Activated CD4-positive, alpha-beta memory T cell treated with anti-CD3 and anti-CD28 coated beads for 36 hours (primary cell): ENCODE measurements at regions of chr2 and their contacts with region 1.

Region 1: DNA sequence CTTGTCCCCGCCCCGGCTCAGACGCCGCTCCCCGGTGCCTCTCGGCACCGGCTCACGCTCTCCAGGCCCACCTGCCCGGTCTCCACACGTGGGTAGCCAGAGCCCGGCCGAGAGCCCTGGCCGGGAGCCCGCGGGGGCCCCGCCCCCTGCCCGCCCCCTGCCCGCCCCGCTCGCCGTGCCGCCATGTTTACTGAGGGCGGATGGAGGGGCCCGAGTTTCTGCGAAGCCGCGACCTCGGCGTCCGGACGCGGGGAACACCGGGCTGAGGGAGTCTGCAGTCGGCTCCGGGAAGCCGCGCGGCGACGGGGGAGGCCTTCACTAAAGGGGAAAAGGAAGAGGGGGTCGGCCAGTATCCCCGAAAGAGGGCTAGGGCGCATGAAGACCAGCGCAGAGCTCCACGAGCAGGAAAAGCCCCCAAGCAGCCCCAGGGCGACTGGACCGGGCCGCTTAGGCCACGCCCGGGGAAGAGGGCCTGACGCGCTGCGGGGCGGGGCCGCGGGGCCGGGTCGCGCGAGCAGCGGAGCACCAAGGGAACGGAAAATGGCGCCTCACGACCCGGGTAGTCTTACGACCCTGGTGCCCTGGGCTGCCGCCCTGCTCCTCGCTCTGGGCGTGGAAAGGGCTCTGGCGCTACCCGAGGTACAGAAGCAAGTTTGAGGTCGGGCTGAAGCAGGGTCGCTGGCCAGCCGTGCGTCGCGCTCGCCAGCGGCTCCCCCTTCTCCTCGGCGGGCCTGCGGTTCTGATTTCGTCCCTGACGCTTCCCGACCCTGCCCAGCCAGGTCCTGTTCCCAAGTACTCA is at the starts of genes ATRAID and SLC5A6:
- DNase-seq: peak; percentile 92
- H3K4me3 Mint-ChIP-seq: peak within 1 kb of the TSS; percentile 98
- H3K27ac Mint-ChIP-seq: peak within 1 kb of the TSS; percentile 99
- H3K4me1 Mint-ChIP-seq: peaks cover 48% of the 10 kb centered on the region
- H3K27me3 Mint-ChIP-seq: no peaks in the 10 kb centered on the region
- total RNA-seq, gene ATRAID: 84.0 to 92.7 TPM
- total RNA-seq, gene SLC5A6: 29.2 to 30.2 TPM

Region 2: DNA sequence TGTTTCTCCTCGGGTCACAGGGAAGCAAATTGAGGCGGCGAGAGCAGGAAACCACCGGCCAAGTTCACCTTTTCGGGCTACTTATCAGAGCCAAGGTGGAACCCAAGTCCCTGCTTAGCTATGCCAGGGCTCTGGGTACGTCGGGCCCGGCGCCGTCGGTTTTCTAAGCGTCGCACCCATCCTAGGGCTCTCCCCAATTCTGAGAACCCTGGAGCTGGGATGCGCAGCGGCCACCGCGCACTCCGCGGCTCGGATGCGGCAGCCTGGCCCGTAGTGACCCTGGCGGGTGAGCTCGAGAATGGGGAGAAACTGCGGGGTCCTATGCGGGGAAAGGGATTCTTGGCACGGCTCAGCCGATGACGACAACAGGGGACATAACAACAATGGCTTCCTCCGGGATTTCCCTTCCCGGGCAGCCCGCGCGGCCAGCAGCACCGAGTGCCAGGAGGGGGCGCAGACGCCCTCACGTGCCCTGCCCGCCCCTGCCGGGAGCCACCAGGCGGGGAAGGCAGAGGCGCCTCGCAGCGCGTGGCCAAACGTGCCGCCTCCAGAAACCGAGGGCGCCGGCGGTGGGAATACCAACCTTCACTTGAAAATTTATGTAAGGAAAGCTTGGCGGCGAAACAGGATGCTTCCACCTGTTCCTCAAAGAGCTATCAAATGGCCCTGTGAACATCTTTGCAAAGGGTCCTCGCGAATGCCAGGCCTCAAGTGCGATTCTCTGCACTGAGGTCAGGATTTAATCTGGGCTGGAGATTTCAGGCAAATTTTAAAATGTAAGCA is 52.9 kb after region 1 on chr2:
- CTCF ChIA-PET with region 1: interaction called, 3 read pairs
- POLR2A ChIA-PET with region 1: no interaction called
- intact Hi-C with region 1: loop called (anchors 2 kb)
- DNase-seq: peak; percentile 82
- H3K4me3 Mint-ChIP-seq: peak overlapping the region; percentile 72
- H3K27ac Mint-ChIP-seq: no peak overlapping the region
- H3K4me1 Mint-ChIP-seq: peaks cover 23% of the 10 kb centered on the region
- H3K27me3 Mint-ChIP-seq: peaks cover 42% of the 10 kb centered on the region